MCF 10A (cell line): ENCODE measurements at regions of chr15 and their contacts with region 1.

Region 1: GRCh38 chr15:71103102-71103676 is 12.1 kb upstream of the THSD4 start:
- DNase-seq: peak; percentile 64
- H3K4me3 Mint-ChIP-seq: no peak overlapping the region
- H3K27ac Mint-ChIP-seq: peak overlapping the region; percentile 9
- H3K4me1 Mint-ChIP-seq: peaks cover 6% of the 10 kb centered on the region
- H3K27me3 Mint-ChIP-seq: no peaks in the 10 kb centered on the region
- CTCF ChIP-seq: peak; percentile 37

Region 2: GRCh38 chr15:70815644-70816043 is 287.5 kb before region 1 on chr15:
- CTCF ChIA-PET with region 1: no interaction called
- POLR2A ChIA-PET with region 1: no interaction called
- intact Hi-C with region 1: no loop called
- DNase-seq: no peak
- H3K4me3 Mint-ChIP-seq: no peak overlapping the region
- H3K27ac Mint-ChIP-seq: no peak overlapping the region
- H3K4me1 Mint-ChIP-seq: peaks cover 5% of the 10 kb centered on the region
- H3K27me3 Mint-ChIP-seq: no peaks in the 10 kb centered on the region
- CTCF ChIP-seq: no peak

Region 3: DNA sequence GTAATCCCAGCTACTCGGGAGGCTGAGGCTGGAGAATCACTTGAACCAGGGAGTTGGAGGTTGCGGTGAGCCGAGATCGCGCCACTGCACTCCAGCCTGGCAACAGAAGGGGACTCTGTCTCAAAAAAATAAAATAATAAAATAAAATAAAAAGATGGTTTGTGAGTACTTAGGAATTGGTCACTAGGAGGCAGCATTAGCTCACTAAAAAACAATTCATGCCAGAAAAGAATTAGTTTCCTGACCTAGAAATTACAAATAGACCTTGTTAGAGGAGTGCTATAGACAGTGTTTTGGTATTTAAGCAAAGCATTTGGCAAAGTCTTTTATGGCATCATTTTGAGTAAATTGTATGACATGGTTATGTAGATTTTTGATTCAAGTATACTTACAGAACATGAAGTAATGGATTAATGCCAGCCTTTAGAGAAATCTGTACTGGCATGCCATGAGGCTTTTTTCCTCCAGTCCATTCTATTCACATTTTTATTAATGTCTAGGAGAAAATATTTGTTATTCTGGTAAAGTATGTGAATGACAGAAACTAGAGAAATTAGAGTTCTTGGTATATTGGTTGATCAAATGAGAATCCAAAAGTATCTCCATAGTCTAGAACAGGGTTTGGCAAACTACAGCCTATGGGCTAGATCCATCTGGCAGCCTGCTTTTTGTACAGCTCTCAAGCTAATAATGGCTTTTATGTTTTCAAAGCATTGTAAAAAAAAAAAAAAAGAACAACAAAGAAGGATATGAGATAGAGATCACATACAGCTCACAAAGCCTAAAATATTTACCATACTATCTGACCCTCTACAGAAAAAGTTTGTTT is 129.0 kb before region 1 on chr15:
- CTCF ChIA-PET with region 1: interaction called, 3 read pairs
- POLR2A ChIA-PET with region 1: no interaction called
- intact Hi-C with region 1: loop called (anchors 10 kb)
- DNase-seq: peak; percentile 52
- H3K4me3 Mint-ChIP-seq: no peak overlapping the region
- H3K27ac Mint-ChIP-seq: no peak overlapping the region
- H3K4me1 Mint-ChIP-seq: no peaks in the 10 kb centered on the region
- H3K27me3 Mint-ChIP-seq: no peaks in the 10 kb centered on the region
- CTCF ChIP-seq: peak; percentile 43

Region 4: DNA sequence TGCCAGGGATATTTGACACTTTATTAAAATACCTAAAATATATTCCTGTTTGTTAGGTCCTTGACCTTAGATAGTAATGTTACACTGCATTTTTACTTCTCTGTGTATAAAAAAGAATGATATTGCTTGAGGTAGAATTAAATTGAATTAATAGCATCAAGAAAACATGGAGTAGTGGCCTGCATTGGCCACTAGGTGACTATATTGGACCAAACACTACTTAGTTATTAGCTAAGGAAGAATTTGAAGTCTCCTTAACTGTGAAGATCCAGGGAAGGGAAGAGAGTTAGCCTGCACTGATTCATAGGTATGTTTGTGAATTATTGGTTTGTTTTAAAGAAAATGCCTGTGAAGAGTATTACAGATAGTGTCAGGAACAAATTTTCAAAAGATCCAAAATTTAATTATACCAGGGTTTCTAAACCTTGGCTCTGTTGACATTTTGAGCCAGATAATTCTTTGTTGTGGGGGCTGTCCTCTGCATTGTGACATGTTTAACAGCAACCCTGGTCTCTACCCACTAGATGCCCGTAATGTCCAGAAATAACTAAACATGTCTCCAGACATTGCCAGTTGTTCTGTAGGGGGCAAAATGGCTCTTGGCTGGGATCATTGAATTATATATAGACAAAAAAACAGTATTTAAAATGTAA is 91.6 kb before region 1 on chr15:
- CTCF ChIA-PET with region 1: interaction called, 5 read pairs
- POLR2A ChIA-PET with region 1: interaction called, 6 read pairs
- intact Hi-C with region 1: loop called (anchors 1 kb)
- DNase-seq: peak; percentile 60
- H3K4me3 Mint-ChIP-seq: no peak overlapping the region
- H3K27ac Mint-ChIP-seq: no peak overlapping the region
- H3K4me1 Mint-ChIP-seq: no peaks in the 10 kb centered on the region
- H3K27me3 Mint-ChIP-seq: no peaks in the 10 kb centered on the region
- CTCF ChIP-seq: peak; percentile 76

Region 5: DNA sequence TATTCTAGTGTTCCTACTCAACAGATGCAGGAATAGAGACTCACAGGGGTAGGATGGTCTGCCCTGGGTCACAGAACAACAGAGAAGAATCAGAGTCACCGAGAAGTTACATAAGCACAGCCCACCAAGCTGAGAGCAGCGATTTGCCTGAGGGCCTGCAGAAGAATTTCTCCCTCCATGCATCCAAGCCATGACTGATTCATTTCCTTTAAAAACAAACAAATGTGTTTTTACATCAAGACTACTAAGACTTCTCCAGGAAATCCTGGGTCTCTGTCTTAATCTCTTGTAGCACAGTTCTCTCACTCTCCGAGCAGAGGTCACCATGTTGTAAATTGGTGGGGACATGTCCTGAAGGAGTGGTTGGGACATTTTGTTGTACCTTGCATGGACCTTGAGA is 171.9 kb after region 1 on chr15:
- CTCF ChIA-PET with region 1: no interaction called
- POLR2A ChIA-PET with region 1: no interaction called
- intact Hi-C with region 1: no loop called
- DNase-seq: peak; percentile 81
- H3K4me3 Mint-ChIP-seq: no peak overlapping the region
- H3K27ac Mint-ChIP-seq: peak overlapping the region; percentile 81
- H3K4me1 Mint-ChIP-seq: peaks cover 49% of the 10 kb centered on the region
- H3K27me3 Mint-ChIP-seq: no peaks in the 10 kb centered on the region
- CTCF ChIP-seq: no peak